Right ventricle myocardium inferior (tissue), 1 donor: ENCODE measurements at regions of chr10 and their contacts with region 1.

Region 1: DNA sequence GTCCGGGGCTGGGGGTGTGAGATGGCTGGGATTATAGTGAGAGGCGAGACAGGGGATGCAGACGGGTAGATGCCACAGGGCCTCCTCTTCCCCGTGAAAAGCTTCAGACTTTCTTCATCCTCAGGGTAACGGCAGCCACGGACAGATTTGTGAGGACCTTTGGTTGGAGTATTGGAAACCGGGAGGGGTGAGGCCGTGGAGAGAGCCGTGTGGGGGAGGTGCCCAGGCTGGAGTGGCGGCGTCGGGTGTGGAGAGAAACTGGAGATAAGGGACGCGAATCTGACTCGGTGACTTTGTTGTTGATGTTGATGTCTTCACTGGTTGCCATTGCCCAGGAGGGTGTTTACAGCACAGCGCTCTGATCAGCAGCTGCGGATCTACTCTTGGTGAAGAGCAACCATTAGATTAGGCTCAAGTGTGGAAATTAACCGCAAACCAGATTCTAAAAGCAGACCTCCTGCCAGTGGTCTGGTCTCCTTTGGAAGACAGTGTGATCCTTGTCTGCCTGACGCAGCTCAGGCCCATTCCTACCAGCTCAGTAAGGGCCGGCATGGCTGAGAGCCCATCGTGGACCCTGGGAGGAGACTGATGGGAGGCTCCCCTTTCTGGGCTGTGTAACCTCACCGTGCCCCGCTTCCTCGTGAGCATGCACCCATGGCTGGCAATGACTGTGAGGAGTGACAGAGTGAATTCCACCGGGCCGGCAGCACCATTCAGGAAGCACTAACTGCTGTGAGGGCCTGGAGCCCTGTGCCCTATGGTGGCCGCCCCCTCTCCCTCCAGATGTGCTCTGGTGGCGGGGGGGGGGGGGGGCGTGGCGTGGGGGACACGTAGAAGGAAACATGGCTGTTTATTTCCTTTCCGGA is 90.3 kb downstream of the INPP5A start:
- DNase-seq: no peak
- ATAC-seq: peak; percentile 1

Region 2: GRCh38 chr10:132588301-132589013 is 39.4 kb before region 1 on chr10:
- intact Hi-C with region 1: loop called (anchors 2 kb)
- DNase-seq: peak; percentile 84
- ATAC-seq: peak; percentile 49